ENCODE measurements at regions of chr3 and their contacts with region 1.

Region 1: GRCh38 chr3:32934150-32934742 is 17.2 kb upstream of the CCR4 start:
- DNase-seq: peak in 2 of 3 donors; percentile 10 to 21
- H3K4me3 ChIP-seq: no peak overlapping the region
- H3K4me3 Mint-ChIP-seq: no peak overlapping the region
- H3K27ac ChIP-seq: no peak overlapping the region
- H3K27ac Mint-ChIP-seq: no peak overlapping the region
- H3K4me1 ChIP-seq: no peaks in the 10 kb centered on the region
- H3K4me1 Mint-ChIP-seq: no peaks in the 10 kb centered on the region
- H3K27me3 ChIP-seq: no peaks in the 10 kb centered on the region
- H3K27me3 Mint-ChIP-seq: peaks cover 0 to 8% (median 0%) of the 10 kb centered on the region in 3 donors
- CTCF ChIP-seq: peak; percentile 75

Region 2: DNA sequence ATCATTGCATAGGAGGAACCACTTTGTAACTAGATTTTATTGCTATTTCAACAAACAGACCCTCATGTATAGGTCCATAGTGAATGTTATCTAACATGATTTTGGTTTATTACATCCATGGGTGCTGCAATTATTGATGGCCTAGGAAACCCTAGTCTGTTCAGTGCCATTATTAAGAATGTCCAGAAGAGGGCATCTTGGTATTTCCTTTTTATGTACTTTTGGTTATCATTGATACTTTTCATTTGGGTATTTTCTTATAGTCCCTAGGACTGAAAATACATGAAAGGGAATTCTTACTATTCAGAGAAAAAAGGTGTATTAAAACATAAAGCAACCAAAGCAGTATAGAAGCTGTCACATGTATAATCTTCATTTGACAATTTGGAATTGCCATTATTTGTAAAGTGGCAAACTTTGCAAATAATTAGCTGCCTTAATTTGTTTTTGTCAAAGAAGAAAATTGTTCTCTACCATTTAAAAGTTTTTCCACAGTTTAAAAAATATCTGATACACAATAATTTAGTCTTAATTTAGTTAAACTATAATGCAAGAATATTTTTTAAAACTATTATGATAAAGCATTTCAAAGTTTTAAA is 200.5 kb before region 1 on chr3:
- intact Hi-C with region 1: loop called in 1 of 2 experiments (anchors 5 kb)
- DNase-seq: peak; percentile 6 to 19 (median 18)
- H3K4me3 ChIP-seq: no peak overlapping the region
- H3K4me3 Mint-ChIP-seq: no peak overlapping the region
- H3K27ac ChIP-seq: no peak overlapping the region
- H3K27ac Mint-ChIP-seq: no peak overlapping the region
- H3K4me1 ChIP-seq: no peaks in the 10 kb centered on the region
- H3K4me1 Mint-ChIP-seq: no peaks in the 10 kb centered on the region
- H3K27me3 ChIP-seq: no peaks in the 10 kb centered on the region
- H3K27me3 Mint-ChIP-seq: peaks cover 0 to 1% (median 0%) of the 10 kb centered on the region in 3 donors
- CTCF ChIP-seq: peak; percentile 79